Ascending aorta (tissue), 2 donors: ENCODE measurements at regions of chr18 and their contacts with region 1.

Region 1: GRCh38 chr18:3623769-3624545 is 174.0 kb downstream of the TGIF1 start:
- DNase-seq: peak; percentile 69 to 96
- H3K4me3 ChIP-seq: peak overlapping the region; percentile 30 to 38
- H3K27ac ChIP-seq: peak overlapping the region; percentile 89 to 96
- H3K4me1 ChIP-seq: peaks cover 10 to 41% of the 10 kb centered on the region in 2 donors
- H3K27me3 ChIP-seq: no peaks in the 10 kb centered on the region
- CTCF ChIP-seq: no peak

Region 2: DNA sequence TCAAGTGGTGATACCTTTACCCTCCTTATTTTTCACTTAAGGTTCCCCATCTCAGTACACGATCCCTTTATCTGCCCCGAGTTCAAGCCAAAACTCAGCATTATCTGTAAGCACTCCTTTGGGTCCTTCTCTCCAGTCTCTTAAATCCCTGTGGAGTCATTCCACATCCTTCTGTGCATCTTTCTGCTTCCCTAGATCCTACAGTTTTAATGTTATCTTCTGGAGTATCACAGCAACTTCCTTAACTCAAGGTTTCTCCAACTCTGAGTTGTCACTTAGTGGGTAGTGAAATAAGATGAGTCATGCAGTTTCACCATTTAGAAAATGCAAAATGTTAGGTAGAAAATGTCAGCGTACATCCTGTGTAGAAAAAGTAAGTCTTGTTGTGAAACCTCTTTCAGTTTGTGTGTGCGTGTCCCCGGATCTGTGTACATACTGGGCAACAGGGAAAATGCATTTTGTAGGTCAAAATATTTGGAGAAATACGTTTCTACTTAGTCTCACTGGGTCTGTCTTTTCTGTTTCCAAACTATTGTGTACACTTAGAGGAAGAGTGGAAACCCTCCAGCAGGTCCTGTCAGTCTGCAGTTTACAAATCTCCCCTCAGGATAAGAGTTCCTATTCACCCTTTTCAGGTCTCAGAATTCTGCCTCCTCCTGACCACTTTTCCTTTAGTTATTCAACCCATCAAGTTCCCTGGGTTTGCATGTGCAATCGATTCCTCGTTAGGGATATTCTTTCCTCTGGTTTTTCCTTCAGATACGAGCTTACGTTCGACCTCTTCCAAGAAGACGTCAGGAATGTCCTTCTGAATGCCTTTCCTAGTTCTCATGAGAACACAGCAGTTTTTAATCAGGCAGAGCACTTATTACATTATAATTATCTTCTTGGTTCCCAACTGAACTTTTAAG is 19.2 kb before region 1 on chr18:
- intact Hi-C with region 1: loop called (anchors 1 kb)
- DNase-seq: no peak
- H3K4me3 ChIP-seq: peak overlapping the region; percentile 54 to 69
- H3K27ac ChIP-seq: peak overlapping the region; percentile 94 to 95
- H3K4me1 ChIP-seq: peaks cover 7 to 24% of the 10 kb centered on the region in 2 donors
- H3K27me3 ChIP-seq: no peaks in the 10 kb centered on the region
- CTCF ChIP-seq: no peak

Region 3: DNA sequence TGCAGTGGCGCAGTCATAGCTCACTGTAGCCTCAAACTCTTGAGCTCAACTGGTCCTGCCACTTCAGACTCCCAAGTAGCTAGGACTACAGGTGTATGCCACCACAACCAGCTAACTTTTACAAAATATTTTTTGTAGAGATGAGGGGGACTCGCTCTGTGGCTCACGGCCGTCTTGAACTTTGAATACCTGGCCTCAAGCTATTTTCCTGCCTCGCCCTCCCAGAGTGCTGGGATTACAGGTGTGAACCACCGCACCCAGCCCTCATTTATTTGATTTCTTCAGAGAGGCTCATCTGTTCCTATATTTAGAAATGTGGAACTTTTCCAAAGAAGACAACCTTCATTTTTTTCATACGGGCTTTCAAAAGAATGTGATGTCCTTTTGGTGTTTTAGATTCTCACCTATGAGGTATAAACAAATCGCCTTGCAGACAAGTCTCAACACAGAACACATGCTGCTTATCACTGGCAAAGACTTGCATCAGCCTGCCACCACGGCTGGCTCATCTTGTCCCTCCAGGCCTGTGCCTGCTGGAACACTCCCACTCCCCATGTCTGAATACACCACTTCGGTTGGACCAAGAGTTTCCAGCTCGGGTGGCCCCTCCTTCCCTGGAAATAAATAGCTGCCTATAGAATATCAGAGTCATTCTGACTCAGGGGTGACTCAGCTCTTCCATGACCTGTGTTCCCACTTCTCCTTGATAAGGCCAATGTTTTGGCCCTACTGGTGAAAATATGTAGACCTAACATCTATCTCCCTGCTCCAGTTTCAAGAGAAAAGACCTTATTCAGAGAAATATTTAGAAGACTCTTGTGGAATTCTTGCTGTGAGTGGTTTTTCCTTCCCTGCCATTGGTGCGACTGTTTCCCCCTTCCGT is 28.7 kb after region 1 on chr18:
- intact Hi-C with region 1: loop called (anchors 1 kb)
- DNase-seq: peak; percentile 32 to 90
- H3K4me3 ChIP-seq: no peak overlapping the region
- H3K27ac ChIP-seq: peak overlapping the region; percentile 7 to 77
- H3K4me1 ChIP-seq: peaks cover 0 to 5% of the 10 kb centered on the region in 2 donors
- H3K27me3 ChIP-seq: no peaks in the 10 kb centered on the region
- CTCF ChIP-seq: no peak

Region 4: DNA sequence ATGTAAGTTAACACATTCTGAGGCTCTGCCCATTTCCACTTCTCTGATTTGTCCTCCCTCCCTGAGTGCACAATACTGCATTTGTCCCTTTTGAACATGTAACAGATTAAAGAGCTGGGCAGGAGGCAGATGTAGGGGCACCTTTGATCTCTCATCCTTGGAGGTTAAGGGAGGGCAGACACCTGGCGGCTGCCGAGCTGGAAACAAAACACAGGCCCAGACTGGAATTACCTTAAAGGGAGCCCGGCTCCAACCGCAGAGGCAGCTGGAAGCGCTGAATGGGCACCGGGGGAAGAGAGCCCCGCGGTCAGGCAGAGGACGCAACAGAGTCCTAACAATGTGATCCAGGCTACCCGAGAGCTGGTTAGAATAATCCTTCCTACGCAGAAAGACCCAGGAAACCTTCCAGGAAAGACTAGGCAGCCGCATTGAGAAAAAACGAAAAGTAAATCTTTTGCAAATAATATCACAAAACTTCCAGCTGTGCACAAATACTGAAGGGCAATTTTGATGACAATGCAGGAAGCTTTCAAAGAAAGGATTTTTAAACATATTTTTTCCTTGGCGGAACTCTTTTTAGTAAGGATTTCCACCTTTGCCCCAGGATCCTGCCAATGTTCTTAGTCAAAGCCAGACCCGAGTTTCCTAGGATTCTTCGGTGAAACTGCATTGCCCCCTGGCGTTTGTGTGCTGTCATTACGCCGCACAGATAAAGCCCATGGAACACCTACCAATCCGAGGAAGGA is 42.0 kb after region 1 on chr18:
- intact Hi-C with region 1: loop called (anchors 5 kb)
- DNase-seq: peak; percentile 31 to 90
- H3K4me3 ChIP-seq: peak overlapping the region; percentile 32 to 51
- H3K27ac ChIP-seq: peak overlapping the region; percentile 36 to 68
- H3K4me1 ChIP-seq: peaks cover 0 to 5% of the 10 kb centered on the region in 2 donors
- H3K27me3 ChIP-seq: no peaks in the 10 kb centered on the region
- CTCF ChIP-seq: peak; percentile 88 to 93 (median 92)

Region 5: GRCh38 chr18:5295981-5296705 is 1672.2 kb after region 1 on chr18:
- intact Hi-C with region 1: loop called (anchors 10 kb)
- DNase-seq: peak; percentile 81 to 97
- H3K4me3 ChIP-seq: peak overlapping the region; percentile 99 to 100
- H3K27ac ChIP-seq: peak overlapping the region; percentile 99
- H3K4me1 ChIP-seq: peaks cover 0 to 14% of the 10 kb centered on the region in 2 donors
- H3K27me3 ChIP-seq: no peaks in the 10 kb centered on the region
- CTCF ChIP-seq: no peak